ENCODE measurements at regions of chr6 and their contacts with region 1.

Region 1: GRCh38 chr6:122730775-122731386 is 48.6 kb upstream of the FABP7 start:
- DNase-seq: peak; percentile 28
- H3K4me3 ChIP-seq: no peak overlapping the region
- H3K27ac ChIP-seq: no peak overlapping the region
- H3K4me1 ChIP-seq: no peaks in the 10 kb centered on the region
- H3K27me3 ChIP-seq: peaks cover 5 to 12% of the 10 kb centered on the region in 2 experiments
- CTCF ChIP-seq: peak; percentile 52 to 54
- POLR2A ChIP-seq: no peak

Region 2: DNA sequence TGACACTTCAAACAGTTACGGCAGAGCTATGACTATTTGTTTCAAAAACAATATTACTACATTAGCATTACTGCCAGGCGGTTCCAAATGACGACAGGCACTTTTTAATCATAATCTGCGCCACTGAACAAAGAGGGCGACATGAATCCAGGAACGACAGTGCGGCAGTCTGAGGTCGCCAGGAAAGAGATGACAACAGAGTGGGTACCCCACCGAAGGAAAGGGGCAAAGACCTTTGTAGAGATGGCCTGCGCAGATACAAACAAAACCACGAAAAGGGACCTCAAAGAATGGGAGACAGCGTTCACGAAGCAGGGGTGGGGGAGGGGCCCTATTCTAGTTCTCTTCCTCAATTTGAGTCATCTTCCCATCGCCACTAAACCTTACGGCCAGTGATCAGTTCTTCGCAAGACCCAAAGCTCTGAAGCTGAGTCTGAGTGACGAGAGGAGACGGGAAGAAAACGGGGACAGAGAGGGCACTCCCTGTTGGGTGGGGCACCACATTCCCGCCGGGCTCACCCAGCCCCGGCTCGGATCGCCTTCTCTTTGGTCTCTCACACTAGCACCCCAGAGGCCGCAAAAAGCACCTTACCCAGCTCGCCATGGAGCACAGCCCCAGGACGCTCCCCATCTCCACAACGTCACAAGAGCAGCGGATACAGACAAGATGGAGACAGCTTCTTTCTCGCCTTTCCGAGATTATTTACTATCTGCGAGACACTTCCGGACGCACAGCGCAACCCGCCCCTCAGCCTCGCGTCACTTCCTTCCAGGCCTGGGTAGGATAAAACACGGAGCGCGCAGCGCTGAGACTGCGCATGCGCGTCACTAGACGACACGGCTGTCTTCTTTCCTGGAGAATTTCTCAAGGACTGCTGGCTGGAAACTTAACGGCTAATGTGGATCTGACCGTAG is 259.5 kb before region 1 on chr6 and contains the start of gene SERINC1:
- CTCF ChIA-PET with region 1: interaction called, 10 read pairs
- POLR2A ChIA-PET with region 1: no interaction called
- dilution Hi-C with region 1: no loop called
- intact Hi-C with region 1: loop called (anchors 5 kb)
- DNase-seq: peak; percentile 97
- H3K4me3 ChIP-seq: peak within 1 kb of the TSS; percentile 83 to 98 (median 97)
- H3K27ac ChIP-seq: peak within 1 kb of the TSS; percentile 91
- H3K4me1 ChIP-seq: peaks cover 8% of the 10 kb centered on the region
- H3K27me3 ChIP-seq: no peaks in the 10 kb centered on the region
- CTCF ChIP-seq: no peak
- POLR2A ChIP-seq: peak; percentile 82
- total RNA-seq, gene SERINC1: 76.5 and 82.0 TPM in 2 replicates

Region 3: GRCh38 chr6:122609856-122610689 is 120.8 kb before region 1 on chr6 and contains the start of gene PKIB:
- CTCF ChIA-PET with region 1: interaction called, 3 read pairs
- POLR2A ChIA-PET with region 1: no interaction called
- dilution Hi-C with region 1: no loop called
- intact Hi-C with region 1: loop called (anchors 2 kb)
- DNase-seq: peak; percentile 71
- H3K4me3 ChIP-seq: peak within 1 kb of the TSS; percentile 34 to 74 (median 38)
- H3K27ac ChIP-seq: no peak within 1 kb of the TSS
- H3K4me1 ChIP-seq: peaks cover 9% of the 10 kb centered on the region
- H3K27me3 ChIP-seq: peaks cover 7 to 21% of the 10 kb centered on the region in 2 experiments
- CTCF ChIP-seq: peak; percentile 13 to 59
- POLR2A ChIP-seq: no peak
- total RNA-seq, gene PKIB: not detected in 2 replicates

Region 4: DNA sequence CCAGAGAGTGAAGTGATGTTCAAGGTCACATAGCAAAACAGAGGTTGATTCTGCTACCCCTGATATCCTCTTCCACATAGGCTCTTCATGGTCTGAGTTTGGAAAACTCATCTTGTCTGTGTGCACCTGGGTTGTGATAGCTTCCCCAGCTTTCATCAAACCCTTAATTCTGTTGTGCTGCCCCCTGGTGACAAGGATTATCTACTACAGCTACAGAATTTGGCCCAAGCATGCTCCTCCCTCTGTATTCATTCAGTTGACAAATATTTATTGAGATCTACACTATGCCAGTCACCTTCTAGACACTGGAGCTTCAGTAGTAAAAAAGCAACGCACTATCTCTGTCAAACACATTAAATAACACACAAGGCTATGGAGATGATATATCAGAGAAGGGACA is 108.6 kb after region 1 on chr6:
- CTCF ChIA-PET with region 1: interaction called, 274 read pairs
- POLR2A ChIA-PET with region 1: no interaction called
- dilution Hi-C with region 1: no loop called
- intact Hi-C with region 1: loop called (anchors 1 kb)
- DNase-seq: peak; percentile 59
- H3K4me3 ChIP-seq: no peak overlapping the region
- H3K27ac ChIP-seq: no peak overlapping the region
- H3K4me1 ChIP-seq: no peaks in the 10 kb centered on the region
- H3K27me3 ChIP-seq: no peaks in the 10 kb centered on the region
- CTCF ChIP-seq: peak; percentile 49 to 56
- POLR2A ChIP-seq: no peak

Region 5: GRCh38 chr6:122962000-122962624 is 231.2 kb after region 1 on chr6:
- CTCF ChIA-PET with region 1: no interaction called
- POLR2A ChIA-PET with region 1: no interaction called
- dilution Hi-C with region 1: no loop called
- intact Hi-C with region 1: no loop called
- DNase-seq: no peak
- H3K4me3 ChIP-seq: no peak overlapping the region
- H3K27ac ChIP-seq: no peak overlapping the region
- H3K4me1 ChIP-seq: no peaks in the 10 kb centered on the region
- H3K27me3 ChIP-seq: no peaks in the 10 kb centered on the region
- CTCF ChIP-seq: no peak
- POLR2A ChIP-seq: no peak

Region 6: GRCh38 chr6:123372737-123373136 is 641.9 kb after region 1 on chr6:
- CTCF ChIA-PET with region 1: no interaction called
- POLR2A ChIA-PET with region 1: no interaction called
- dilution Hi-C with region 1: no loop called
- intact Hi-C with region 1: loop called (anchors 10 kb)
- DNase-seq: no peak
- H3K4me3 ChIP-seq: no peak overlapping the region
- H3K27ac ChIP-seq: no peak overlapping the region
- H3K4me1 ChIP-seq: no peaks in the 10 kb centered on the region
- H3K27me3 ChIP-seq: no peaks in the 10 kb centered on the region
- CTCF ChIP-seq: no peak
- POLR2A ChIP-seq: no peak

Measured in endothelial cell of umbilical vein (primary cell).